ENCODE measurements at regions of chr6 and their contacts with region 1.

Region 1: DNA sequence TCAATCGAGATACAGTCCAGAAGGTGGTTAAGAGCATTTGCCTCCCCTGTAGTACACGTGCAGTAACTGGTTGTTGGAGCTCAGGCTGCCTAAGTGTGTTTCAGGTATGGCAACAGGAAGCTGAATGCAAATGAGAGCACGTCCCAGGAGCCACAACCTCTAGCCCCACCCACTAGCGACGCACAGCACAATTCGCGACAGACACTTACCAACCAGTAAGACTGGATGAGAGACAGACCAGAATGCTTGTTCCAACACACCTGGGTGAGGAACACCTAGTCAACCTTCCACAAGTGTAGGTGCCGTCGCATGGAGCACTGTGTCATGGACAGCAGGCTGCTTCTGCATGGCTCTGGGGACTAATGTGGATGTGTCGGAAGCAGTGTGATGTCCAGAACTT is 7.2 kb upstream of the SERPINB1 start:
- DNase-seq: peak; percentile 80
- ATAC-seq: peak; percentile 69
- H3K4me3 ChIP-seq: no peak overlapping the region
- H3K4me3 Mint-ChIP-seq: peak overlapping the region; percentile 52
- H3K27ac ChIP-seq: peak overlapping the region; percentile 30 to 73
- H3K27ac Mint-ChIP-seq: peak overlapping the region; percentile 84
- H3K4me1 ChIP-seq: peaks cover 27 to 33% of the 10 kb centered on the region in 2 donors
- H3K4me1 Mint-ChIP-seq: peaks cover 43% of the 10 kb centered on the region
- H3K27me3 ChIP-seq: no peaks in the 10 kb centered on the region
- H3K27me3 Mint-ChIP-seq: no peaks in the 10 kb centered on the region
- CTCF ChIP-seq: no peak

Region 2: GRCh38 chr6:2791124-2791974 is 57.5 kb before region 1 on chr6:
- CTCF ChIA-PET with region 1: interaction called, 57 read pairs
- POLR2A ChIA-PET with region 1: interaction called, 6 read pairs
- intact Hi-C with region 1: loop called (anchors 1 kb)
- DNase-seq: peak; percentile 78
- ATAC-seq: peak; percentile 83
- H3K4me3 ChIP-seq: no peak overlapping the region
- H3K4me3 Mint-ChIP-seq: peak overlapping the region; percentile 67
- H3K27ac ChIP-seq: peak overlapping the region in 1 of 2 donors; percentile 18
- H3K27ac Mint-ChIP-seq: peak overlapping the region; percentile 82
- H3K4me1 ChIP-seq: peaks cover 30 to 35% of the 10 kb centered on the region in 2 donors
- H3K4me1 Mint-ChIP-seq: peaks cover 36% of the 10 kb centered on the region
- H3K27me3 ChIP-seq: no peaks in the 10 kb centered on the region
- H3K27me3 Mint-ChIP-seq: no peaks in the 10 kb centered on the region
- CTCF ChIP-seq: peak; percentile 82

Region 3: DNA sequence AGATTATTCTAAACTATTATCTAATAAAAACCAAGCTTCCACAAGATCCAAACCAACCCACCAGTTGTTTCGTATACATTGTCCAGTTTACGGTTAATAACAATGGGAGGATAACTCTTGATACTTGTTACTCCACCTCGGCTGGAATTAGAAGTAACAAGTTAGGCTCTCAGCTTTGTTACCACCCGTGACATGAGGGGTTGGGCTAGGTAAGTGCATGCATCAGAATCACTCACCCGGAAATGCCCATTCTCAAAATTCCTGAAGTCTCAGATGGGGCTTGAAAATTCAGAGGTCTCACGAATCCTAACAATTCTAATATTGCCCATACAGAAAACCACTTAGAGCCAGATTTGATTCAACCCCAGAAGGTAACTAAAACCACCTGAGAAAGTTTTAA is 19.8 kb after region 1 on chr6:
- CTCF ChIA-PET with region 1: interaction called, 45 read pairs
- POLR2A ChIA-PET with region 1: interaction called, 12 read pairs
- intact Hi-C with region 1: loop called (anchors 1 kb)
- DNase-seq: no peak
- ATAC-seq: no peak
- H3K4me3 ChIP-seq: no peak overlapping the region
- H3K4me3 Mint-ChIP-seq: no peak overlapping the region
- H3K27ac ChIP-seq: no peak overlapping the region
- H3K27ac Mint-ChIP-seq: no peak overlapping the region
- H3K4me1 ChIP-seq: peaks cover 40 to 44% of the 10 kb centered on the region in 2 donors
- H3K4me1 Mint-ChIP-seq: peaks cover 69% of the 10 kb centered on the region
- H3K27me3 ChIP-seq: no peaks in the 10 kb centered on the region
- H3K27me3 Mint-ChIP-seq: no peaks in the 10 kb centered on the region
- CTCF ChIP-seq: no peak

Region 4: GRCh38 chr6:2900821-2901644 is 52.2 kb after region 1 on chr6:
- CTCF ChIA-PET with region 1: interaction called, 73 read pairs
- POLR2A ChIA-PET with region 1: interaction called, 9 read pairs
- intact Hi-C with region 1: loop called (anchors 1 kb)
- DNase-seq: no peak
- ATAC-seq: no peak
- H3K4me3 ChIP-seq: peak overlapping the region in 4 of 5 experiments; percentile 10 to 95 (median 90)
- H3K4me3 Mint-ChIP-seq: peak overlapping the region; percentile 100
- H3K27ac ChIP-seq: peak overlapping the region; percentile 31 to 91
- H3K27ac Mint-ChIP-seq: peak overlapping the region; percentile 97
- H3K4me1 ChIP-seq: peaks cover 45 to 48% of the 10 kb centered on the region in 2 donors
- H3K4me1 Mint-ChIP-seq: peaks cover 56% of the 10 kb centered on the region
- H3K27me3 ChIP-seq: no peaks in the 10 kb centered on the region
- H3K27me3 Mint-ChIP-seq: no peaks in the 10 kb centered on the region
- CTCF ChIP-seq: no peak

Region 5: DNA sequence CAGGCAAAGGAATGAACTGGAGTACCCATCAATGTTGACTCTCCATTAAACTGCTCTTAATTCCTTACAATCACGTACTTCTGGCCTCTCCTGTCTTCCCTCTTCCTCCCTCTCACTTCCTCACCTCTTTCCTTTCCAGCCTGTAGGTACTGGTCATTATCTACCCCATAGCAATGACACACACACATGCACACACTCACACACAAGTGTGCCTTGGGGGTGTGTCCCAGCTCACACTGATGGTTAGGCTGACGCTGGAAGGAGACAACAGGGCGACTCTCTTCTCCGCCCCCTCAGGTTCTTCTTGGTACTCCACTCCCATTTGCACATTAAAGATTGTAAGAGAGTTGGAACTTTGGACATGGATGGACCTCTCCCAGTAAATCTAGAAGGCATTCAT is 68.2 kb after region 1 on chr6:
- CTCF ChIA-PET with region 1: interaction called, 165 read pairs
- POLR2A ChIA-PET with region 1: interaction called, 10 read pairs
- intact Hi-C with region 1: no loop called
- DNase-seq: no peak
- ATAC-seq: peak; percentile 56
- H3K4me3 ChIP-seq: no peak overlapping the region
- H3K4me3 Mint-ChIP-seq: no peak overlapping the region
- H3K27ac ChIP-seq: no peak overlapping the region
- H3K27ac Mint-ChIP-seq: no peak overlapping the region
- H3K4me1 ChIP-seq: no peaks in the 10 kb centered on the region
- H3K4me1 Mint-ChIP-seq: peaks cover 2% of the 10 kb centered on the region
- H3K27me3 ChIP-seq: no peaks in the 10 kb centered on the region
- H3K27me3 Mint-ChIP-seq: no peaks in the 10 kb centered on the region
- CTCF ChIP-seq: peak; percentile 45

Region 6: GRCh38 chr6:3052481-3053230 is 203.8 kb after region 1 on chr6:
- CTCF ChIA-PET with region 1: interaction called, 7 read pairs
- POLR2A ChIA-PET with region 1: no interaction called
- intact Hi-C with region 1: loop called (anchors 5 kb)
- DNase-seq: no peak
- ATAC-seq: no peak
- H3K4me3 ChIP-seq: no peak overlapping the region
- H3K4me3 Mint-ChIP-seq: peak overlapping the region; percentile 76
- H3K27ac ChIP-seq: no peak overlapping the region
- H3K27ac Mint-ChIP-seq: peak overlapping the region; percentile 72
- H3K4me1 ChIP-seq: peaks cover 5 to 22% of the 10 kb centered on the region in 2 donors
- H3K4me1 Mint-ChIP-seq: peaks cover 13% of the 10 kb centered on the region
- H3K27me3 ChIP-seq: peaks cover 0 to 12% (median 3%) of the 10 kb centered on the region in 4 experiments
- H3K27me3 Mint-ChIP-seq: peaks cover 17% of the 10 kb centered on the region
- CTCF ChIP-seq: no peak